ENCODE measurements at regions of chr6 and their contacts with region 1.

Region 1: DNA sequence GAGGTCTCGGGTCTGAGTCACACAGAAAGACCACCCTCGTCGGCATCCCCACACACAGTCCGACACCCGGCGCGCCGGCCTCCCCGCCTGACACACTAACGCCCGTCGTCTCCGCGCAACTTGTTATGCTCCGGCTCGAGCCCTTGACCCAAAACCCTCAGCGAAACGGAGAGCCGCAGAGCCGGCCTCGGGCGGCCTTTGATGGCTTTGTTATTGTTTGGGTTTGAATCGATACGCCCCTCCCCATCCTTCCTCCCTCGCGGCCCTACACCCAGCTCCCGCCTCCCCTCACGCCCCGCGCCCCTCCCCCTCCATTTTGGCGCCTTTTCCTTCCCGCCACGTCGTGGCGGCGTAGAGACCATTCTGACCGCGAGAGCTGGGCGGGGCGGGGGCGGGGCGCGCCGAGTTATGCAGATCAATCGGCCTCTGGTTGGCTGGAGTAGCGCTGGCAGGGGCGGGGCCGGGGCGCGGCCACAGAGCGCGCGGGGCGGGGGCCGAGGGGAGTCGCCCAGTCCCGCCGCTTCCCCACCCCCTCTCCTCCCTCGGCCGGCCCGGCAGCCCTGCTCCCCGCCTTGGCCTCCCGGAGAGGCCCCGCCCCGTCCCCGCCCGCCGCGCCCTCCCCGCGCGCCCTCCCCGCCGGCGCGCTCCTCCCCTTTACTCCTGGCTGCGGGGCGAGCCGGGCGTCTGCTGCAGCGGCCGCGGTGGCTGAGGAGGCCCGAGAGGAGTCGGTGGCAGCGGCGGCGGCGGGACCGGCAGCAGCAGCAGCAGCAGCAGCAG is at the start of gene PIM1:
- DNase-seq: peak; percentile 94 to 96 (median 95)
- H3K4me3 ChIP-seq: peak within 1 kb of the TSS; percentile 78 to 99 (median 97)
- H3K4me3 Mint-ChIP-seq: peak within 1 kb of the TSS; percentile 94 to 98
- H3K27ac ChIP-seq: peak within 1 kb of the TSS; percentile 53 to 83
- H3K27ac Mint-ChIP-seq: peak within 1 kb of the TSS; percentile 94 to 95 (median 95)
- H3K4me1 ChIP-seq: peaks cover 39 to 46% of the 10 kb centered on the region in 2 donors
- H3K4me1 Mint-ChIP-seq: peaks cover 43% of the 10 kb centered on the region
- H3K27me3 ChIP-seq: peaks cover 0 to 8% of the 10 kb centered on the region in 2 donors
- H3K27me3 Mint-ChIP-seq: peaks cover 2 to 8% (median 2%) of the 10 kb centered on the region in 3 donors
- CTCF ChIP-seq: no peak
- polyA plus RNA-seq, gene PIM1: 20.5 to 25.0 (median 24.4) TPM

Region 2: GRCh38 chr6:37029249-37029971 is 140.3 kb before region 1 on chr6:
- intact Hi-C with region 1: loop called (anchors 1 kb)
- DNase-seq: peak; percentile 96 to 99 (median 98)
- H3K4me3 ChIP-seq: no peak overlapping the region
- H3K4me3 Mint-ChIP-seq: no peak overlapping the region
- H3K27ac ChIP-seq: peak overlapping the region; percentile 31 to 86
- H3K27ac Mint-ChIP-seq: peak overlapping the region; percentile 93 to 98 (median 95)
- H3K4me1 ChIP-seq: peaks cover 11 to 25% of the 10 kb centered on the region in 2 donors
- H3K4me1 Mint-ChIP-seq: peaks cover 25% of the 10 kb centered on the region
- H3K27me3 ChIP-seq: no peaks in the 10 kb centered on the region
- H3K27me3 Mint-ChIP-seq: peaks cover 0 to 5% (median 1%) of the 10 kb centered on the region in 3 donors
- CTCF ChIP-seq: peak; percentile 97

Region 3: DNA sequence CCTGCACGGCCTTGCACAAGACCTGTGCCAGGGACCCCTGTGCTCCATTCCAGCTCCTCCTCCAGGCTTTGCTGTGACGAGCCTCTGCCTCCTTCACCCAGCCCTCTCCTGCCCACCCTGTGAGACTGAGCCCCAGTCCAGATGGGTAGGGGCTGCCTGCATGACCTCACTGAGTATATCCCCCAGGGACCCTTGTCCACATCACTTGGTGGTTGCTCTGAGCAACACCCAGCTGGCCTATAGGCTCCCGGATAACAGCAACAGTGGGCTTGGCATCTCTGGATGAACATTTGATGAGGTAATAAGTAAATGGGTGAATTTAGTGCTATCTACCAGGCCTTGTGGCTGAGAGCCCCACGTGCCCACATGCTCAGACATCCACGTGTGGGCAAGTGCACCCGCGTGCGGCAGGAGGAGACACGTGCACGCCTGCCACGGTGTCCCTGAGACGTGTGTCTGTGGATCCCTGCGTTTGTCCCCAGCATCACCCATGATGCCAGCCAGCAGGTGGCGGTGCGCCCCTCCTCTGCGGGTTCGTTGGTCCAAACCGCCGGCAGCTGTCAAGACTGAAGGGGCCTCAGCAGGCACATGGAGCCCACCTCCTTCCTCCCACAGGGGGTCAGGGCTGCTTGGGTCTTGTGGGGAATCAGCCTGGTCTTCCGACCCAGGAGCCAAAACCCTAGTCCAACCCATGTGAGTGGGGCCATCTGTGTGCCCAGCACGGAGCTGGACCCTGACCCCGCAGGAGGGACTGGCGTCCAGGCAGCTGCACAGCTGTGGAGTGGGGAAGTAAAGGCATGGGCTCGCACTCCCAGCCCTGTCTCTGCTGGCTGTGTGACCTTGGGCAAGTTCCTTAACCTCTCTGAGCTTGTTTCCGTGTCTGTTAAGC is 118.3 kb before region 1 on chr6:
- intact Hi-C with region 1: loop called (anchors 1 kb)
- DNase-seq: peak; percentile 84 to 87 (median 84)
- H3K4me3 ChIP-seq: peak overlapping the region in 1 of 3 experiments; percentile 44
- H3K4me3 Mint-ChIP-seq: peak overlapping the region in 1 of 2 donors; percentile 64
- H3K27ac ChIP-seq: peak overlapping the region; percentile 95 to 97
- H3K27ac Mint-ChIP-seq: peak overlapping the region; percentile 88 to 99 (median 99)
- H3K4me1 ChIP-seq: peaks cover 53 to 67% of the 10 kb centered on the region in 2 donors
- H3K4me1 Mint-ChIP-seq: peaks cover 65% of the 10 kb centered on the region
- H3K27me3 ChIP-seq: no peaks in the 10 kb centered on the region
- H3K27me3 Mint-ChIP-seq: peaks cover 0 to 9% (median 8%) of the 10 kb centered on the region in 3 donors
- CTCF ChIP-seq: peak; percentile 88

Region 4: DNA sequence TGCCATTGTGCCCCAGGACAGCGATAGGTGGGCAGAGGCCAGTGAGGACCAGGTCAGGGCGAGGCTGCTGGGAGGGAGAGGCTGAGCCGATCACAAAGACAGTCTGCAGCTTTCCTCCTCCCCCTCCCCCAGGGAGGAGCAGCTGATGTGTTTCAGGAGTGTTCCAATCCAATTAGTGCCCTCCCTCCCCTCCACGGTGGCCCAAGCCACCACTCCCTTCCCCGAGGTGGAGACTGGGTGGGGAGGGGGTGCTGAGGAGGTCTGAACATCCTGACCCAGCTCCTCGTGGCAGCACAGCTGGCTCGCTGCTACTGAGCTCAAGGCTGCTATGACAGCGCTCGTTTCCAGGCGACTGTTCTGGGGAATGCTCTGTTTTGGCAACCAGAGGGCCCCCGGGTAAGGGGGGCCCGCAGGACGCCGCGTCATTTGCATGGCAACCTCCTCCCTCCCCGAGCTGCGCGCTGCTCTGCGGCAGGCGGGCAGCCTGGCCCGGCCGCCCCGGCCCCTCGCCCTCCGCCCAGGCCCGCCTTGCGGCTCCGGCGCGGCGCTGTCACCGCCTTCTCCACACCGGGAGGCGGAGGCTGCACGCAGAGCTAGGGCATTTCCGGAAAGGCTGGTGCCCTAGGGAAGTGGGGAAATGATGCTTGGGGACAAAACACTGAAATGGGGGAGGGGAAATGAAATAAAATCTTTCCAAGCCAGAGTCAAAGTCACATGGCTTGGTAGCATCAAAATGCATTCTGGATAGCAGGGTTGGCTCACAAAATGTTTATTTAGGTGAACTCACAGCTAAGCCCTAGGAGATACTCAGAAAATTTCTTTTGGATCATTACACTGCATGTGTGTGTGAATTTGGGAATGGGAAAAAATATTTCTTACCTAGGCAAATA is 67.2 kb before region 1 on chr6:
- intact Hi-C with region 1: loop called (anchors 2 to 10 kb)
- DNase-seq: peak; percentile 85 to 88 (median 86)
- H3K4me3 ChIP-seq: peak overlapping the region; percentile 24 to 68 (median 40)
- H3K4me3 Mint-ChIP-seq: peak overlapping the region; percentile 72 to 86
- H3K27ac ChIP-seq: peak overlapping the region; percentile 90 to 93
- H3K27ac Mint-ChIP-seq: peak overlapping the region; percentile 93 to 99 (median 97)
- H3K4me1 ChIP-seq: peaks cover 40 to 58% of the 10 kb centered on the region in 2 donors
- H3K4me1 Mint-ChIP-seq: peaks cover 55% of the 10 kb centered on the region
- H3K27me3 ChIP-seq: no peaks in the 10 kb centered on the region
- H3K27me3 Mint-ChIP-seq: peaks cover 0 to 2% (median 1%) of the 10 kb centered on the region in 3 donors
- CTCF ChIP-seq: no peak

Region 5: GRCh38 chr6:37190159-37190535 is 20.5 kb after region 1 on chr6:
- intact Hi-C with region 1: loop called in 1 of 2 experiments (anchors 2 kb)
- DNase-seq: peak in 1 of 3 donors; percentile 28
- H3K4me3 ChIP-seq: peak overlapping the region in 1 of 3 experiments; percentile 32
- H3K4me3 Mint-ChIP-seq: no peak overlapping the region
- H3K27ac ChIP-seq: peak overlapping the region; percentile 80 to 84
- H3K27ac Mint-ChIP-seq: peak overlapping the region; percentile 83 to 95 (median 92)
- H3K4me1 ChIP-seq: peaks cover 58 to 68% of the 10 kb centered on the region in 2 donors
- H3K4me1 Mint-ChIP-seq: peaks cover 63% of the 10 kb centered on the region
- H3K27me3 ChIP-seq: no peaks in the 10 kb centered on the region
- H3K27me3 Mint-ChIP-seq: peaks cover 0 to 3% (median 0%) of the 10 kb centered on the region in 3 donors
- CTCF ChIP-seq: no peak

Region 6: GRCh38 chr6:37207903-37208456 is 38.3 kb after region 1 on chr6:
- intact Hi-C with region 1: loop called (anchors 2 to 5 kb)
- DNase-seq: peak; percentile 79 to 83 (median 81)
- H3K4me3 ChIP-seq: no peak overlapping the region
- H3K4me3 Mint-ChIP-seq: peak overlapping the region; percentile 39 to 61
- H3K27ac ChIP-seq: no peak overlapping the region
- H3K27ac Mint-ChIP-seq: peak overlapping the region in 5 of 7 donors; percentile 19 to 77 (median 58)
- H3K4me1 ChIP-seq: peaks cover 22 to 24% of the 10 kb centered on the region in 2 donors
- H3K4me1 Mint-ChIP-seq: peaks cover 38% of the 10 kb centered on the region
- H3K27me3 ChIP-seq: no peaks in the 10 kb centered on the region
- H3K27me3 Mint-ChIP-seq: peaks cover 0 to 5% (median 0%) of the 10 kb centered on the region in 3 donors
- CTCF ChIP-seq: peak; percentile 93